Left lung (tissue), 14 donors: ENCODE measurements at regions of chr2 and their contacts with region 1.

Region 1: DNA sequence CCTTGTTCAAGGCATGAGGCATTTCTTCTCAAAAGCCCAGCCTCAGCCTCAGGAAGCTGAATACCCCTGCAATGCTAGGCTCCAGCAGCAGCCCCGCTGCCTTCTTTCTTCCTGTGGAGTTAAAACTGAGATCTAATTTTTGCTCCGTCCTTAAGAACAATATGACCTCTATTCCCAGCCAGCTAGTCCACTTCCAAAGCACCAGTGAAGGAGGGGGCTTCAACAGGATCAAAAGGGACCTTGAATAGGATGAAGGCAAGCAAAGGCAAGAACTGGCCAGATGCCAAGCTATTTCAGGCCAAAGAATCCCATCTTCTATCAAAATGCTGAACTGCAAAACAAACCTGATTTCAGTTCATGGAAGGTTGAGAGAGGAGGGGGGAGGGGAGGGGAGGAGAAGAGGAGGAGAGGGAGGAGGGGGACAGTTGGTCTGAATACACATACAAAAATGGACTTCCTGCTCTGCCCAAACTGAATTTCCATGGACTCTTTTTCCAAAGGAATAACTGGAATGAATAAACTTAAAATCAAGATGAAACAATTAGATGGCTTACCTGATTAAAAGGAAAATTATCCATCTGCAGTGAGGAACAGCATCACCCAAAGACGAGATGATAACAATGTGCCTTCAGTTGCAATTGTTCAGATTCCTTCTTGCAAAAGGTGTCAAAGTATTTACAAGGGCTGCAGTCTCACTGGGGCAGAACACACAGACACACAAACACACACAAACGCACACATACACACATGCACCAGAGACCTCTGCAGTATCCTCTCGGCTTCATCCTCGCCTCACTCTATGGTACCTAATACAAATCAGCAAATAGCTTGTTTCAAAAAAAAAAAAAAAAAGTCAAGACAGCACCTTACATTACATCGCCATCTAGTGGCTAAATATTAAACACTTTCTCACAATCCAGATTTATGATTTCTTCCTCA is at the start of gene SCN1A:
- DNase-seq: peak in 2 of 4 donors; percentile 36 to 44
- ATAC-seq: peak; percentile 60
- H3K4me3 ChIP-seq: peak within 1 kb of the TSS in 1 of 2 donors; percentile 30
- H3K27ac ChIP-seq: peak within 1 kb of the TSS; percentile 29 to 71
- H3K4me1 ChIP-seq: no peaks in the 10 kb centered on the region
- H3K27me3 ChIP-seq: no peaks in the 10 kb centered on the region
- CTCF ChIP-seq: peak; percentile 45 to 48
- polyA plus RNA-seq, gene SCN1A: 0.60 to 2.5 (median 1.0) TPM

Region 2: GRCh38 chr2:166057370-166058164 is 69.9 kb before region 1 on chr2:
- intact Hi-C with region 1: loop called in 1 of 2 experiments (anchors 5 kb)
- DNase-seq: peak in 1 of 4 donors; percentile 19
- ATAC-seq: peak; percentile 61
- H3K4me3 ChIP-seq: no peak overlapping the region
- H3K27ac ChIP-seq: no peak overlapping the region
- H3K4me1 ChIP-seq: peaks cover 0 to 8% of the 10 kb centered on the region in 2 donors
- H3K27me3 ChIP-seq: no peaks in the 10 kb centered on the region
- CTCF ChIP-seq: peak; percentile 25 to 52

Region 3: DNA sequence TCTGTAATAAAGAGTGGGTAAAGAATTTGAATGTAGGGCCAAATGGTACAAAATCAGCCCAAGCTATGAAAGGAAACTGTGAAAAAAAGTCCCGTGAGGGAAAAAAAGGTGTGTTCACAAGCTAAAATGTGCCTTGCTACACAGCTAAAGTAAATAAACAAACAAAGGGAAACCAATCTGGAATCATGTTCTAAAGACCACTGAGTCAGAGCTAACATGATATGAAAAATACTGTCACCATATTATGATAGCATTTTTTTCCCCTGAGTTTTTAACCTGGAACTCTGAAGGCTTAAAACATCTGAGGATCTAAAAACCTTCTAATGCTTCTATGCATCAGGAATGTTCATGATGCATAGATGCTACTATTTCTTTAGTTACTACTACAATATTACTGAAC is 58.5 kb before region 1 on chr2:
- intact Hi-C with region 1: no loop called
- DNase-seq: no peak
- ATAC-seq: no peak
- H3K4me3 ChIP-seq: no peak overlapping the region
- H3K27ac ChIP-seq: no peak overlapping the region
- H3K4me1 ChIP-seq: no peaks in the 10 kb centered on the region
- H3K27me3 ChIP-seq: no peaks in the 10 kb centered on the region
- CTCF ChIP-seq: no peak